ENCODE measurements at regions of chr14 and their contacts with region 1.

Region 1: DNA sequence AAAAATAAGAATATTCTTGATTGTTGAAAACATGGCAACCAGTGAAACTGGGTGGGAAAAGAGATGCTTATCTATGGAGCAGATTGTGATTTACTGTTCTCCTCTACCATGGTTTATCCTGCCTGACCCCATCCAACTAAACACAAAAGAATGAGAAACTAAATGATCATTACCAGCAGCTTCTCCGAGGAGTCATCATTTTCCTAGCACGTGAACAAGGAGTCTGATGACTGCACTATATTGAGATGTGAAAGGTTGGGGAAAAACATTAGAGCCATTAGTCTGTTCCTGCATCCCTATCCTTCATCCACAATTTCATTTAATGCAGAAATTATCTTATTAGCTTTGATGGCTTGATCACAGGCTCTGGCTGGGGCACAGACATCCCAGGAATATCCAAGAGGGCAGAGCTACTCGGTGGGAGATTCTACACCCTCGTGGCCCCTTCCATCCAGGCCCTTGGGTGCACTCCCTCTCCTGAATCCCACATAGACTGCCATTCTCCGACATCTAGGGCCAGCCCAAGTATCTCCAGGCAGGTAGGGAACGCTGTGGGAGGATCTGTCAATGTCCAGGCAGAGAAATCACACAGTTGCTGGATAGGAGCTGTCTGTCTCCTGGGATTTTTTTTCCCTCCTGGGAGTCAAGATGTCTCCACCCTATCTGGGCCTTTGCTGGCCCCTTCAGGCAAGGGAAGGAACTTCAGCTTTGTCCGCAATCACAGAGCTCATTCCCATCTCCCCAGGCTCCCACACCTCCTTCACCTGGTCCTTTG is 43.3 kb upstream of the DHRS4 start:
- DNase-seq: peak; percentile 73
- H3K4me3 ChIP-seq: no peak overlapping the region
- H3K27ac ChIP-seq: no peak overlapping the region
- H3K4me1 ChIP-seq: peaks cover 0 to 2% of the 10 kb centered on the region in 2 experiments; a peak in 1 of 4 replicates
- H3K27me3 ChIP-seq: no peaks in the 10 kb centered on the region
- CTCF ChIP-seq: peak; percentile 76
- EP300 ChIP-seq: no peak
- RAD21 ChIP-seq: peak; percentile 82

Region 2: DNA sequence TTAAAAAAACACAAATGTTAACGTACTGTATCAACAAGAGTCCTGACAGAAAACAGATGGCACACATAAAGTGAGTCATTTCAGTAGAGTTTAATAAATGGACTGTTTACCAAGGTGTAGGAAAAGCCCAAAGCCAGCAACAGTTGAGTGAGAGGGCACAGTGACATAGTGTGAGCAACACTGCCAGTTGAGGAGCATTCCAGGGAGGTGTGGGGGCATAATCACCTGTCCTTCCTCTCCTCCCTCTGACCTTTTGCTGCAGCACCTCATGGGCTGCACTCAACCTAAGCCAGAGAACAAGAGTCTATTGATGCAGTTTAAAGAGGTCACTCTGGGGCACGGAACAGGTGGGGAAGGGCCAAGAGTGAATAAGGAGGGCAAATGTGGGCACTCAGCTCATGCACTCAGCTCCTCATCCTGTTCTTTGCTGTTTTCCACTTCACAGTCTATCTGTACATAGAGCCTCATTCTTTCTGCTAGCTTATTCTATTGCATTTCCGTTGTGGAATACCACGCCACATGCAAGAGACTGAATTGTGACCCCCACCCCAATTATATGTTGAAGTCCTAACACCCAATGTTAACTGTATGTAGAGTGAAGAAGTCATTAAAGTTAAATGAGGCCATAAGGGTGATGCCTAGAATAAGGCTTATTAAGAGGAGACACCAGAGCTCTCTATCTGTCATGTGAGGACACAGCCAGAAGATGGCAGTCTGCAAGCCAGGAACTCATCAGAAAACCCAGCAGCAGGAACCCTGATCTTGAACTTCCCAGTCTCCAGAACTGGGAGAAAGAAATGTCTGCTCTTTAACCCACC is 244.7 kb before region 1 on chr14:
- CTCF ChIA-PET with region 1: interaction called, 11 read pairs
- POLR2A ChIA-PET with region 1: no interaction called
- DNase-seq: no peak
- H3K4me3 ChIP-seq: no peak overlapping the region
- H3K27ac ChIP-seq: no peak overlapping the region
- H3K4me1 ChIP-seq: no peaks in the 10 kb centered on the region; a peak in 1 of 4 replicates
- H3K27me3 ChIP-seq: no peaks in the 10 kb centered on the region; the same call in 1 of the 2 replicates
- CTCF ChIP-seq: peak; percentile 66
- EP300 ChIP-seq: no peak
- RAD21 ChIP-seq: peak; percentile 64

Region 3: DNA sequence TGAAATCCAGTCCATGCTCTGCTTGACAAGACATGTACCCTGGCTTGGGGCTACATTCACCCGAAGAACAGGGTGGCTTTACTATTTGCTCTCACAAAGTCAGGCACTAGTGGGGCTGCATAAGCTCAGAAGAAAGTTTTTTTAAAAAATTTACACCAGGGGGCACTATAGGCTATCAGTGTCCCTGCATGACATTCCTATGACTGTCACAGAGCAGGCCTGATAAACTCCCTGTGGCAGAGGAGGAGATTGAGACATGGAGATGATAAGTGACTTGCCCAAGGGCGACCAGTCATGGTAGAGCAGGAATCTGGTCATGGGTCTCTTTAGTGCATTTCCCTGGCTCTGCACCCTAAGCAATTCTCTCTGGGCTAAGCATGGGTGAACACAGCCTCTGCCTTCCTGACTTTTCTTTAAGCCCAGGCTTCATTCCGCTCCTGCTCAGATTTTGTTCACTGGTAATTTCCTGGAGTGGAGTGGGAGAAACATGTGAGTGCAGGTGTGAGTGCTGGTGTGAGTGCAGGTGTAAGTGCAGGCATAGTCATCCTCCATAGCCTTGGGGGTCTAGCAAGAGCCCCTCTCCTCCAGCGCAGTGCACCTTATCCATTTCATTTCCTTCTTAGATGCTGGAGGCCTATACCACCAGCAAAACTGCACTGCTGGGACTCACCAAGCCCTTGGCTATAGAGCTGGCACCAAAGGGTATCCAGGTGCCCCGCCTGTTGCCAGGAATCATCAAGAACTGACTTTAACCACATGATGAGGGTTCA is 182.5 kb before region 1 on chr14:
- CTCF ChIA-PET with region 1: interaction called, 10 read pairs
- POLR2A ChIA-PET with region 1: no interaction called
- DNase-seq: peak; percentile 58
- H3K4me3 ChIP-seq: no peak overlapping the region
- H3K27ac ChIP-seq: no peak overlapping the region
- H3K4me1 ChIP-seq: no peaks in the 10 kb centered on the region
- H3K27me3 ChIP-seq: no peaks in the 10 kb centered on the region
- CTCF ChIP-seq: peak; percentile 59
- EP300 ChIP-seq: no peak
- RAD21 ChIP-seq: peak; percentile 66

Region 4: DNA sequence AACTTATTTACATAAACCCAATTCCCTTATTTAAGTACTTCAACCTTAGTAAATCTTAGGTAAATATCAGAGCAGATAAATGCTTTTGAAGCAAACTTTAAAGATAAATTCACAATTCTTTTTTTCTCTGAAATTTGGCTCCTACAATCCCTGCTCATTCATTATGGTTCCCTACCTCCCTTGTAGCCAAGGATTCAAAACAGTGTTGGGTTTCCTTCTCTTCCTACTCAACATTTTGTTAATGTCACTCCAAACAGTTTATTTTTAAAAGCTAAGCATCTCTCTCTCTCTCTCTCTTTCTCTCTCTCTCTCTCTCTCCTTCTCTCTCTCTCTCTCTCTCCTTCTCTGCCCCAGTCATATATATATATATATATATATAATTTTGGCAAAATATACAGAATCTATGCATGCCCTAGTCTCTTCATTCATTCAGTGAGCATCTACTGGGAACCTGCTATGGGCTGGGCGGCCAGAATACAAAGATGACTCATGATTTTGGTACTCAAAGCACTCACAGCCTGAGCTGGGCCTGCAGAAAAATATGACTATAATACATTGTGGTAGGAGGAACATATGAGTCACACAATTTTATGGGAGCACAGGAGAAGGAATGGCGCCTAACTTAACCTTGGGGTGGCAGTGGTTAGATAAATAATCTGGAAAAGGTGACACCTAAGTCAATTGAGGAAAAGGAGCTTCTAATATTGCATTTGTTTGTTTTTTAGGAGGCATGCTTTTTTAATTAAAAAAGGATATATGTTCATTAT is 80.4 kb before region 1 on chr14:
- CTCF ChIA-PET with region 1: no interaction called
- POLR2A ChIA-PET with region 1: no interaction called
- DNase-seq: no peak
- H3K4me3 ChIP-seq: no peak overlapping the region
- H3K27ac ChIP-seq: peak overlapping the region in 1 of 2 experiments; percentile 53; a peak in 2 of 4 replicates
- H3K4me1 ChIP-seq: no peaks in the 10 kb centered on the region
- H3K27me3 ChIP-seq: no peaks in the 10 kb centered on the region
- CTCF ChIP-seq: no peak
- EP300 ChIP-seq: peak in 1 of 2 experiments; percentile 65; a peak in 1 of 4 replicates
- RAD21 ChIP-seq: no peak

Region 5: GRCh38 chr14:23929822-23930294 is 19.6 kb after region 1 on chr14:
- CTCF ChIA-PET with region 1: interaction called, 24 read pairs
- POLR2A ChIA-PET with region 1: no interaction called
- DNase-seq: peak; percentile 81
- H3K4me3 ChIP-seq: no peak overlapping the region; a peak in 1 of 4 replicates
- H3K27ac ChIP-seq: no peak overlapping the region; a peak in 1 of 4 replicates
- H3K4me1 ChIP-seq: no peaks in the 10 kb centered on the region; a peak in 1 of 4 replicates
- H3K27me3 ChIP-seq: no peaks in the 10 kb centered on the region
- CTCF ChIP-seq: peak; percentile 81
- EP300 ChIP-seq: no peak
- RAD21 ChIP-seq: peak; percentile 73